CD4-positive, alpha-beta T cell (primary cell): ENCODE measurements at regions of chr2 and their contacts with region 1.

Region 1: GRCh38 chr2:206556357-206556949 is 85.8 kb upstream of the FAM237A start:
- DNase-seq: peak in 3 of 14 experiments; percentile 52 to 61 (median 60)
- ATAC-seq: peak; percentile 54
- H3K4me3 ChIP-seq: no peak overlapping the region
- H3K4me3 Mint-ChIP-seq: no peak overlapping the region
- H3K27ac ChIP-seq: no peak overlapping the region
- H3K27ac Mint-ChIP-seq: no peak overlapping the region
- H3K4me1 ChIP-seq: peaks cover 5% of the 10 kb centered on the region
- H3K4me1 Mint-ChIP-seq: peaks cover 42% of the 10 kb centered on the region
- H3K27me3 ChIP-seq: no peaks in the 10 kb centered on the region
- H3K27me3 Mint-ChIP-seq: peaks cover 5% of the 10 kb centered on the region
- CTCF ChIP-seq: peak; percentile 43

Region 2: GRCh38 chr2:206159346-206160124 is 396.9 kb before region 1 on chr2 and contains the starts of genes EEF1B2 and NDUFS1:
- CTCF ChIA-PET with region 1: no interaction called
- POLR2A ChIA-PET with region 1: interaction called, 6 read pairs
- intact Hi-C with region 1: loop called (anchors 5 kb)
- DNase-seq: peak; percentile 91 to 99 (median 95)
- ATAC-seq: peak; percentile 82
- H3K4me3 ChIP-seq: peak within 1 kb of the TSS; percentile 82
- H3K4me3 Mint-ChIP-seq: peak within 1 kb of the TSS; percentile 99
- H3K27ac ChIP-seq: peak within 1 kb of the TSS; percentile 85 to 92
- H3K27ac Mint-ChIP-seq: peak within 1 kb of the TSS; percentile 97
- H3K4me1 ChIP-seq: peaks cover 39% of the 10 kb centered on the region
- H3K4me1 Mint-ChIP-seq: peaks cover 71% of the 10 kb centered on the region
- H3K27me3 ChIP-seq: no peaks in the 10 kb centered on the region
- H3K27me3 Mint-ChIP-seq: no peaks in the 10 kb centered on the region
- CTCF ChIP-seq: no peak
- total RNA-seq, gene EEF1B2: 1,109 to 1,132 TPM
- total RNA-seq, gene NDUFS1: 33.4 to 34.3 TPM

Region 3: DNA sequence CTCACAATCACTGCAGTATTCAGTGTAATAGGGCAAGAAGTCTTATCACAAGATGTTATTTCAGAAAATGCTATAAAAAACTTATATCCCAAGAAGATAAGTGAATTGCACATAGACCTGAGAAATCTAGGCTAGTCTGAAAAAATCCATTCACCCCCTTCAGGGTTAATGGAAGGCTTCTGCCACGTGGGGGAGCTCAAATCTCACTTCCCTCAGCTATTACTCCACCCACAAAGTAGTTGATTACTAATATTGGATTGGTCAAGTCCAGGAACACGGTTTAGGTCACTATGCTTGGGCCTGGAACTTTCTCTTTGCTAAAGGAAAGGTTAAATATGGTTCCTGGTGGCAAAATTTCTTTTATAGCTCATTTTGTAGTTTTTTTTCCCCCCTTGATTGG is 164.3 kb before region 1 on chr2:
- CTCF ChIA-PET with region 1: no interaction called
- POLR2A ChIA-PET with region 1: no interaction called
- intact Hi-C with region 1: loop called (anchors 2 to 5 kb)
- DNase-seq: peak in 4 of 14 experiments; percentile 7 to 48 (median 24)
- ATAC-seq: no peak
- H3K4me3 ChIP-seq: no peak overlapping the region
- H3K4me3 Mint-ChIP-seq: no peak overlapping the region
- H3K27ac ChIP-seq: no peak overlapping the region
- H3K27ac Mint-ChIP-seq: no peak overlapping the region
- H3K4me1 ChIP-seq: no peaks in the 10 kb centered on the region
- H3K4me1 Mint-ChIP-seq: no peaks in the 10 kb centered on the region
- H3K27me3 ChIP-seq: no peaks in the 10 kb centered on the region
- H3K27me3 Mint-ChIP-seq: no peaks in the 10 kb centered on the region
- CTCF ChIP-seq: peak; percentile 19

Region 4: DNA sequence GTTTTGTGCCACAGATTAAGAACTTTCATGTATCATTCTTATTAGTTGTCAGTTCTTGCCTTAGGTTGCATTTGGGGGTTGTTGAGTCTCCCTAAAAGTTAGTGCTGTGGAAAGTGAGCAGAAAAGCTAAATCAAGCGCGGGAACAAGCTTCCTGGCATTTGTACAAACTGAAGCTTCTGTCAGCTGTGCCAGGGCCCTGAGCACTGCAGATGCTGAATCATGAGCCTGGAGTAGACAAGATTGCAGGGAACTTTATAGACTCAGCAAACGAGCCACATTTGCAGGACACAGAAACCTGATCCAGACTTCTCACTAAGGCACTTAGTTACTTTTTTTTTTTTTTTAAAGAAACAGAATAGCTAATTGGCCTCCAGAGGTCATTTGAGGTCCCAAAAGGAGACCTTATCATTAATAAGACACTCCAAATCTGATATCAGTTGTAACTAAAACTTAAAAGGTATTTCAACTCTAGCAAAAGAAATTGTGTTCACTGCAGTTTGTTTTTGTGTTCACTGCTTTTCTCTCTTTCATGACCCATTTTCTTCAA is 24.4 kb before region 1 on chr2:
- CTCF ChIA-PET with region 1: interaction called, 3 read pairs
- POLR2A ChIA-PET with region 1: interaction called, 5 read pairs
- intact Hi-C with region 1: loop called in 1 of 2 experiments (anchors 2 kb)
- DNase-seq: no peak
- ATAC-seq: no peak
- H3K4me3 ChIP-seq: no peak overlapping the region
- H3K4me3 Mint-ChIP-seq: peak overlapping the region; percentile 17
- H3K27ac ChIP-seq: peak overlapping the region in 1 of 2 donors; percentile 6
- H3K27ac Mint-ChIP-seq: peak overlapping the region; percentile 73
- H3K4me1 ChIP-seq: peaks cover 15% of the 10 kb centered on the region
- H3K4me1 Mint-ChIP-seq: peaks cover 27% of the 10 kb centered on the region
- H3K27me3 ChIP-seq: no peaks in the 10 kb centered on the region
- H3K27me3 Mint-ChIP-seq: peaks cover 5% of the 10 kb centered on the region
- CTCF ChIP-seq: no peak

Region 5: GRCh38 chr2:206543073-206543472 is 13.4 kb before region 1 on chr2:
- CTCF ChIA-PET with region 1: no interaction called
- POLR2A ChIA-PET with region 1: interaction called, 6 read pairs
- intact Hi-C with region 1: loop called in 1 of 2 experiments (anchors 2 kb)
- DNase-seq: peak in 3 of 14 experiments; percentile 17 to 37 (median 26)
- ATAC-seq: peak; percentile 94
- H3K4me3 ChIP-seq: no peak overlapping the region
- H3K4me3 Mint-ChIP-seq: no peak overlapping the region
- H3K27ac ChIP-seq: no peak overlapping the region
- H3K27ac Mint-ChIP-seq: peak overlapping the region; percentile 19
- H3K4me1 ChIP-seq: peaks cover 3% of the 10 kb centered on the region
- H3K4me1 Mint-ChIP-seq: peaks cover 19% of the 10 kb centered on the region
- H3K27me3 ChIP-seq: no peaks in the 10 kb centered on the region
- H3K27me3 Mint-ChIP-seq: no peaks in the 10 kb centered on the region
- CTCF ChIP-seq: no peak

Region 6: DNA sequence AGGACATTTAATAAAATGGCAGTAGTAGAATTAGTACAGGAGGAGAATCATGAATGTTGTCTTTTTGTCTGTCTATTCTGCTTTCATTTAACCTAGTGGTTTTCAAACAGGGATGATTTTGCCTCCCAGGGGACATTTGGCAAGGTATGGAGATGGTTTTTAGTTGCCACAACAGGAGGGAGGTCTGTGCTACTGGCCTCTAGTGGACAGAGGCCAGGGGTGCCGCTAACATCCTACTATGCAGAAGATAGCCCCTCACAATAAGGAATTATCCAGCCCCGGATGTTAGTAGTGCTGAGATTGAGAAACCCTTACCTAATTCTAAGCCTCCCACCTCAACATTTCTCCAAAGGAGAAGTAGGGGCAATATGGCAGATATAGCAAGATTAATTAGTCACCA is 227.3 kb after region 1 on chr2:
- CTCF ChIA-PET with region 1: no interaction called
- POLR2A ChIA-PET with region 1: no interaction called
- intact Hi-C with region 1: loop called (anchors 5 kb)
- DNase-seq: no peak
- ATAC-seq: no peak
- H3K4me3 ChIP-seq: no peak overlapping the region
- H3K4me3 Mint-ChIP-seq: no peak overlapping the region
- H3K27ac ChIP-seq: no peak overlapping the region
- H3K27ac Mint-ChIP-seq: no peak overlapping the region
- H3K4me1 ChIP-seq: no peaks in the 10 kb centered on the region
- H3K4me1 Mint-ChIP-seq: peaks cover 25% of the 10 kb centered on the region
- H3K27me3 ChIP-seq: no peaks in the 10 kb centered on the region
- H3K27me3 Mint-ChIP-seq: no peaks in the 10 kb centered on the region
- CTCF ChIP-seq: peak; percentile 23